Activated T-helper 1 cell treated with anti-CD3 and anti-CD28 coated beads, Interleukin-12 subunit alpha, Interleukin-12 subunit beta, Interleukin-2, Interleukin-4 antibody, amounts not matched to agents 30 ng/mL and 10 ng/mL and 1 ng/mL, durations not matched to agents 14 hours and 24 hours and 36 hours (primary cell): ENCODE measurements at regions of chr6 and their contacts with region 1.

Region 1: DNA sequence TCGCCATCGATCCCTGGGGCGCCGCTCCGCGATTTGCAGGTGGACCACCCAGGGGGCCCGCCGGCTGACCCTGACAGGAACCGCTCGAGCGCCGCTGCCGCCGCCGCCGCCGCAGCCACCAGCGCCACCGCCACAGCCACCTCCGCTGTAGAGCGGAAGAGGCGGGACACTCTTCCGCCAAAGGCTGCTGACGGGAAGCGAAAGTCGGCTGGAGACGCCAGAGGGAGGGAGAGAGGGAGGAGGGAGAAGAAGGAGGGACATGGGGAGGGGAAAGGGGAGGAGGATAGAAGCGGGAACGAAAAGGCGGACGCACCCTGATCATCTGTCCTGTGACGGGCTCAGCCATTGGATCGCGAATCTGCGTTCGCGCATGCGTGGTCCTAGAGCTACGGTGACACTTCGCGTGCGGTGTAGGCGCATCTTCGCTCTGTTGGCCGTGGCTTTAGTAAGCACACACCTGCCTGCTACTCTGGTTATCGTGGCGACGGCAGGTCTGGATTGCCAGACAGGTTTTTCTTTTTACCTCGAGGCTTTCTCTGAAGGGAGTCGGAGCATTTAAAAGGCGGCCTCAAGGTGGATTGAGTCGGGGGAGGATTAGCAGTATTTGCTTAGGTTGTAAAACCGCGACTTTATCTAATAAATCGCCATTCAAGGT is at the start of gene TMEM30A:
- DNase-seq: peak; percentile 97
- H3K4me3 Mint-ChIP-seq: no peak within 1 kb of the TSS
- H3K27ac Mint-ChIP-seq: no peak within 1 kb of the TSS
- H3K4me1 Mint-ChIP-seq: peaks cover 40% of the 10 kb centered on the region
- H3K27me3 Mint-ChIP-seq: no peaks in the 10 kb centered on the region
- total RNA-seq, gene TMEM30A: 66.6 and 67.2 TPM in 2 replicates

Region 2: GRCh38 chr6:75243333-75244062 is 41.3 kb before region 1 on chr6 and contains the start of gene COX7A2:
- intact Hi-C with region 1: loop called (anchors 1 kb)
- DNase-seq: peak; percentile 83
- H3K4me3 Mint-ChIP-seq: peak within 1 kb of the TSS; percentile 96
- H3K27ac Mint-ChIP-seq: peak within 1 kb of the TSS; percentile 98
- H3K4me1 Mint-ChIP-seq: peaks cover 24% of the 10 kb centered on the region
- H3K27me3 Mint-ChIP-seq: peaks cover 12% of the 10 kb centered on the region
- total RNA-seq, gene COX7A2: 495 and 497 TPM in 2 replicates

Region 3: GRCh38 chr6:75272145-75272840 is 12.5 kb before region 1 on chr6:
- intact Hi-C with region 1: loop called (anchors 1 kb)
- DNase-seq: no peak
- H3K4me3 Mint-ChIP-seq: no peak overlapping the region
- H3K27ac Mint-ChIP-seq: peak overlapping the region; percentile 6
- H3K4me1 Mint-ChIP-seq: peaks cover 82% of the 10 kb centered on the region
- H3K27me3 Mint-ChIP-seq: no peaks in the 10 kb centered on the region

Region 4: DNA sequence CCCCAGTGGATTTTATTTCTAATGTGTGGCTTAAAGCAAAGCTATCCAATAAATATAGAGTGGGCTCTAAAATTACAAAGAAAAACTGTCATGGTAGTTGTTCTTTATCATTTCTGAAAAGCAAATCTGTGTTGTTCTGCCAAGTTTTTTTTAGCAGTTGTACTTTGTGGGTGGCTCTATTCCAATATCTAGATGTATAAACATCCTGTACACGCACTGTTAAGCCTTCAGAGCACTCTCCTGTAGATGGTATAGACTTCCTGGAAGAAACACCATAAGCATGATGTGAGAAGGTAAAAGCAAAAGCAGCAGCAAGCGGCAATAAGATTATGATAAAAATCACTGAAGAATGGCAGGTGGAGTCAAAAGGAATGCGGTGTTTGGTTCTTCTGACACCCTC is 21.3 kb after region 1 on chr6:
- intact Hi-C with region 1: no loop called
- DNase-seq: no peak
- H3K4me3 Mint-ChIP-seq: no peak overlapping the region
- H3K27ac Mint-ChIP-seq: no peak overlapping the region
- H3K4me1 Mint-ChIP-seq: peaks cover 7% of the 10 kb centered on the region
- H3K27me3 Mint-ChIP-seq: peaks cover 2% of the 10 kb centered on the region

Region 5: GRCh38 chr6:75493400-75494064 is 208.8 kb after region 1 on chr6 and contains the start of gene FILIP1:
- intact Hi-C with region 1: loop called (anchors 1 kb)
- DNase-seq: no peak
- H3K4me3 Mint-ChIP-seq: no peak within 1 kb of the TSS
- H3K27ac Mint-ChIP-seq: no peak within 1 kb of the TSS
- H3K4me1 Mint-ChIP-seq: peaks cover 33% of the 10 kb centered on the region
- H3K27me3 Mint-ChIP-seq: peaks cover 53% of the 10 kb centered on the region
- total RNA-seq, gene FILIP1: not detected in 2 replicates